Endothelial cell of umbilical vein (primary cell): ENCODE measurements at regions of chr10 and their contacts with region 1.

Region 1: DNA sequence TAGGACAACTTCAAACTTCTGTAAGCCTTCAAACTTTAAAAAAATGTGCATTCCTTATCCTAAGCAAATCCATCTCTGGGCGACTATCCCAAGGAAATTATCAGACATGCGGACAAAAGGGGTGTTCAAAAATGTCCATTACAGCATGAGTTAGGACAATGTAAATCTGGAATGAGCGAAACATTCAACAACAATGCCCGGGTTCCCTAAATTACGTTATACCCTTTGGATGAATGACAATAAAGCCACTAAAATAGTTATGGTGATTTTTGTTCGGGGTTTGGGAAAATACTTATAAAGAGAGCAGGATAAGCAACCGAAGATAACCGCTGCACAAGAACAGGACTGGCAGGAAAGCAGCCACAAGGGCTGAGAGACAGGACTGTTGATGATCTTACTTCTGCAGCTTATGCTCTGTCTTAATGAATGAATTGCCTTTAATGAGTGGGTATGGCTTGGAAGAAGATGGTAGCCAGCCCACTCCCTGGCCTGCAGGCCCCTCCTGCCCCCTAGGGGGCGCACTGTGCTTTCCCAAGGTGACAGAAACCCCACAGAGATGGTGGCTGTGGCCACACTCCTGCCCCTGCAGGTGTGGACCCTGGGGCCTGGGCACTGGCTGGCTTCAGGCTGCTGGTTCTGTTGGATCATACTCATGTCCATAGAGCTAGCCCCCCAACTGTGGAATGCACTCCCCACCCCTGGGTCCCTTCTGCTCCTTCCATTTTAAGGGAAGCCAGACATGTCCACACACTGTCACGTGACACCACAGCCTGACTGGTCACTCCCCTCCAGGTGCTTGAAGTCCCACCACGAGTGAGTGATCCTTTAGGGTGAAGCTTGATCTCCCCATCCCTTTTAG is 45.0 kb downstream of the ZCCHC24 start:
- DNase-seq: no peak
- H3K4me3 ChIP-seq: no peak overlapping the region
- H3K27ac ChIP-seq: no peak overlapping the region
- H3K4me1 ChIP-seq: peaks cover 26% of the 10 kb centered on the region
- H3K27me3 ChIP-seq: no peaks in the 10 kb centered on the region
- CTCF ChIP-seq: peak; percentile 75 to 86
- POLR2A ChIP-seq: no peak

Region 2: DNA sequence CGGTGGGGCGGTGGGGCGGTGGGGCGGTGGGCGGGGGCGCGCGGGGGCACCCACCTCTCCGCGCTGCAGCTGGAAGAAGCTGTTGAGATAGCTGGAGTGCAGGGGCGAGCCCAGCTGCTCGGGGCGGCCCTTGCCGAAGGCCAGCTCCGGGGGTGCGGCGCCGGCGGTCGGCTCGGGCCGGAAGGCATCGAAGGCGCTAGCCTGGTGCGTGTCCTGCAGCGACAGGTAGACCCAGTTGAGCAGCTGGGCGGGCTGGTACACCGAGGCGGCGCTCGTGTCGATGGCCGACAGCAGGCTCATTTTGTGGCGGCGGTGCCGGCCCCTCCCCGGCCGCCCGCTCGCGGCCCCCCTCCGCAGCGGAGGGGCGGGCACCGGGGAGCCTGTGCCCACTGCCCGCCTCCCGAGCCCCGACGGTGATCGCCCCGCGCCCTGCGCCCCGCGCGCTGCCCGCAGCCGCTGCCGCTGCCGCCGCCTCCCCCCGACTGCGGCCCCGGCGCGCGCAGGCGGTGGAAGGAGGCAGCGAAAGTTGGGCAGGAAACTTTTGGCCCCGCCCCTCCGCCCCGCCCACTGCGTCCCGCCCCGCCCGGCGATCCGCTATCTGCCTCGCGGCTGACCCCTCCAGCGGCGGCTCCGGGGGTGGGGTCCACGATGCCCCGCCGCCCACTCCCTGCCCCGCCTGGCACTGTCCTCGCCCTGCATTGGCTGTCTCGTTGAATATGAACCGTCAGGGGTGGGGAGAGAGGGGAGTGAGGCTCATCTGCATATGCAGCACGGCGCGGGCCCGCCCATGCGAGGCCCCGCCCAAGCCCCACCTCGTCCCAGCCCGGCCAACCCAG is 45.0 kb after region 1 on chr10 and contains the start of gene ZCCHC24:
- CTCF ChIA-PET with region 1: interaction called, 8 read pairs
- POLR2A ChIA-PET with region 1: interaction called, 4 read pairs
- dilution Hi-C with region 1: no loop called
- intact Hi-C with region 1: loop called (anchors 1 kb)
- DNase-seq: peak; percentile 98
- H3K4me3 ChIP-seq: peak within 1 kb of the TSS; percentile 45 to 65 (median 64)
- H3K27ac ChIP-seq: no peak within 1 kb of the TSS
- H3K4me1 ChIP-seq: peaks cover 19% of the 10 kb centered on the region
- H3K27me3 ChIP-seq: no peaks in the 10 kb centered on the region
- CTCF ChIP-seq: no peak
- POLR2A ChIP-seq: peak; percentile 62
- total RNA-seq, gene ZCCHC24: 5.7 and 8.4 TPM in 2 replicates

Region 3: DNA sequence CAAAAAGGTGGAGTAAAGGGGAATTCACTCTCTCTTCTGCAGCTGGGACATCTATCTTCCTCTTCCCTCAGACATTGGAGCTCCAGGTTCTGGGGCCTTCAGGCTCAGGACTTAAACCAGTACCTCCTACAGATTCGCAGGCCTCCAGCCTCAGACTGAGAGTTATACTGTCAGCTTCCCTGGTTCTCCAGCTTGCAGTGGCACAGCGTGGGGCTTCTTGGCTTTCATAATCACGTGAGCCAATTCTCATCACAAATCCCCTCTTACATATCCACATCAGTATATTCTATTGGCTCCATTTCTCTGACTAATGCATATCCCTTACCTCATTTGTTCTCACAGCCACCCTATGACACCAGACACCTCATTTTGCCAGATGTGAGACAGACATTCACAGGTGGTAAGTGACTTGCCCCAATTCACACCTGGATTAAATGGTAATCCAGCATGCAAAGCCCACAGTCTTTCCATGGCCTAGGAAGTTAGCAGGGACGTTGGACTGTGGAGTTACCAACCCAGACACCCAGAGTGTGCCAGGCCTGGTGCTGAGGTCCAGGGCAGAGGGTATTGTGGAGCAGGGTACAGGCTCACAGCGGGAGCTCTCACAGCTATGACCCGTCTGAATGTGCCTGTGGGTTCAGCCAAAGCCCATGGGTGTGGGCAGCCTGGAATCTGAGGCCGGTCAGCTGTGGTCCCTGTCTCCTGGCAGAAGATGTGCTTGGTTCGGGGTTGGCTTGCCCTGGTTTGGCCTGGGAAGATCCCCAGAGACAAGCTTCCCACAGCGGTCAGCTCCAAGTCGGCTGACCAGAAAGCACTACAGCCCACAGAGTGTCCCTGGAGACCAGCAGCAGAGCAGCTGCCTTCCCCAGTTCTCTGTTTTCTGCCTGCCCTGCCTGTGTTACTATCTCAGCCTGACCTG is 63.5 kb after region 1 on chr10:
- CTCF ChIA-PET with region 1: interaction called, 14 read pairs
- POLR2A ChIA-PET with region 1: no interaction called
- dilution Hi-C with region 1: no loop called
- intact Hi-C with region 1: loop called (anchors 1 kb)
- DNase-seq: no peak
- H3K4me3 ChIP-seq: no peak overlapping the region
- H3K27ac ChIP-seq: no peak overlapping the region
- H3K4me1 ChIP-seq: no peaks in the 10 kb centered on the region
- H3K27me3 ChIP-seq: peaks cover 12 to 42% of the 10 kb centered on the region in 2 experiments
- CTCF ChIP-seq: no peak
- POLR2A ChIP-seq: no peak

Region 4: DNA sequence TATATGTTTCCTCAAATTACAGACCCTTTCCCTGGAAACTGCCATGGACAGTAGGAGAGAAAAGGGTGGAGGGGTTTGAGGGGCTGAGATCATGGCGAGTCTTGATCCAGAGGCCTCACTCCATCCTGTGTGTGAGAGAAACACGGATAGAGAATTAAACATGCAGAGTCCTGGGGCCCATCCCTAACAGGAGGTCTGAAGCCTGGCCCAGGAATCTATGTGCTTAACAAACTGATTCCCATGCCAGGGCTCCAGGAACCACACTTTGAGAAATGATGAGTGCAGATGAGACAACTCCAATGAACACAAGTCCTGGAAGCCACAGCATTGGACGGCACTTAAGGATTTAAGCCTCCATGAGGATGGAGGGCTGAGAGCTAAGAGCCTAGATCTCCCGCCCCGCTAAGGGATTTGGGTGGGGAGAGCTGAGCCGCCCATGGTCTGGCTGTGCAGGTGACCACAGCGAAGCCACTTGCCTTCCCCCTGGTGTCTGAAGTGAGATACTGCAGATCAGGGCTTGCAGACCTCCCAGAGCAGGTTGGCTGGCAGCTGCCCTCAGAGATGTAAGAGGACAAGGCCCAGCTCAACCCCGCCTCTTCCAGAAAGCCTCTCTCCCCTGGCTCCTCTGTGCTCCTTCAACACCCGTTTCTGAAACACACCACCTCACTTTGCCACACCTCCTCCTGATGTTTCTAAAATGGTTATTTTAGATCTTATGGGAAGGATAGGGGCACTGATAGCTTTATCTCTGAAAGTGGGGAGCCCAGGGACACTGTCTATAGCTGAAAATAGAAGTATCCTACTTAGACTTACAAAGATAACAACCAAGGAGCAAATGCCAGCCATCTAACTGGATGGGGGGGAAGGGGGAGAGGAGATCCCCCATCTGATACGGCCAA is 87.2 kb after region 1 on chr10:
- CTCF ChIA-PET with region 1: interaction called, 4 read pairs
- POLR2A ChIA-PET with region 1: no interaction called
- dilution Hi-C with region 1: no loop called
- intact Hi-C with region 1: loop called (anchors 1 kb)
- DNase-seq: peak; percentile 50
- H3K4me3 ChIP-seq: no peak overlapping the region
- H3K27ac ChIP-seq: no peak overlapping the region
- H3K4me1 ChIP-seq: no peaks in the 10 kb centered on the region
- H3K27me3 ChIP-seq: peaks cover 3 to 6% of the 10 kb centered on the region in 2 experiments
- CTCF ChIP-seq: peak; percentile 60 to 86
- POLR2A ChIP-seq: no peak